GM12878 (cell line): ENCODE measurements at regions of chr19 and their contacts with region 1.

Region 1: DNA sequence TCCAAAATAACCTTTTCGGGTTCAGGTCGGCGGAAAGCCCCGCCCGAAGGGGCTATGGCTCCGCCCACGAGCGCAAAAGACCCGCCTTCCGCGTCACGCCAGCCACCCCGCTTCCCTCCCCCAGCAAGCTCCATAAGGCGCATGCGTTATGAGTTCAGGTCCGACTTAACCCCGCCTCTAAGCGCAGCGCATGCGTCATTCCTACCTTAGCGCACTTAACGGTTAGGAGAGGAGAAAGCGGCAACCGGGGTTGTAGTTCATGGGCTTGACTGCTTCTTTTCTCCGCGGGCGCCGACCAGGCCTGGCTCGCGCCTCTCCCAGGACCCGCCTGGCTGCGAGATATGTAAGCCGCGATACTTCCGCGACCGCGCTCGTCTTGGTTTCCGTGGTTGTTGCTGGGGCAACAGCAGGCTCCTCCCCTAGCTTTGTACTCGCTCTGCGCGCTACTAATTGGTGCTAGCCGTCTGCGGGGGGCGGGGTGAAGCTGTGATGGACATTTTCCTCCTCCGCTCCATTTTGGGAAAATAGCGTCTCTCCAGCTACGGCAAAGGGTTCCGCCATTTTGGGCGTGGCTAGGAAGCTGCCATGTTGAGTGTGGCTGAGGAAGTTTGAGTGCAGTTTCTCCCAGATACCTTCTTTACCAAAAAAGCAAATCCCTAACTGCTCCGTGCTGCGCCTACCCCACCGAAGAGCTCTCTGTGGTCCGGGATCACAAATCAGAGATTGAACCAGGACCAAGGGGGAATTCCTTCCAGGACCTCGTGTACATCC is at the start of gene B9D2:
- DNase-seq: peak; percentile 94
- ATAC-seq: peak; percentile 93
- H3K4me3 ChIP-seq: peak within 1 kb of the TSS; percentile 92
- H3K27ac ChIP-seq: peak within 1 kb of the TSS; percentile 94
- H3K4me1 ChIP-seq: peaks cover 28% of the 10 kb centered on the region
- H3K27me3 ChIP-seq: no peaks in the 10 kb centered on the region
- CTCF ChIP-seq: no peak
- EP300 ChIP-seq: no peak
- POLR2A ChIP-seq: peak; percentile 93
- RAD21 ChIP-seq: no peak
- polyA plus RNA-seq, gene B9D2: 2.5 to 5.0 TPM

Region 2: GRCh38 chr19:41226053-41226873 is 137.7 kb before region 1 on chr19:
- CTCF ChIA-PET with region 1: no interaction called
- POLR2A ChIA-PET with region 1: no interaction called
- RAD21 ChIA-PET with region 1: no interaction called
- SMC1A ChIA-PET with region 1: no interaction called
- in situ Hi-C with region 1: no loop called
- intact Hi-C with region 1: no loop called
- DNase-seq: no peak
- ATAC-seq: no peak
- H3K4me3 ChIP-seq: no peak overlapping the region
- H3K27ac ChIP-seq: no peak overlapping the region
- H3K4me1 ChIP-seq: no peaks in the 10 kb centered on the region
- H3K27me3 ChIP-seq: peaks cover 0 to 3% of the 10 kb centered on the region in 2 experiments; a peak in 2 of 4 replicates
- CTCF ChIP-seq: no peak
- EP300 ChIP-seq: no peak
- POLR2A ChIP-seq: no peak
- RAD21 ChIP-seq: no peak

Region 3: DNA sequence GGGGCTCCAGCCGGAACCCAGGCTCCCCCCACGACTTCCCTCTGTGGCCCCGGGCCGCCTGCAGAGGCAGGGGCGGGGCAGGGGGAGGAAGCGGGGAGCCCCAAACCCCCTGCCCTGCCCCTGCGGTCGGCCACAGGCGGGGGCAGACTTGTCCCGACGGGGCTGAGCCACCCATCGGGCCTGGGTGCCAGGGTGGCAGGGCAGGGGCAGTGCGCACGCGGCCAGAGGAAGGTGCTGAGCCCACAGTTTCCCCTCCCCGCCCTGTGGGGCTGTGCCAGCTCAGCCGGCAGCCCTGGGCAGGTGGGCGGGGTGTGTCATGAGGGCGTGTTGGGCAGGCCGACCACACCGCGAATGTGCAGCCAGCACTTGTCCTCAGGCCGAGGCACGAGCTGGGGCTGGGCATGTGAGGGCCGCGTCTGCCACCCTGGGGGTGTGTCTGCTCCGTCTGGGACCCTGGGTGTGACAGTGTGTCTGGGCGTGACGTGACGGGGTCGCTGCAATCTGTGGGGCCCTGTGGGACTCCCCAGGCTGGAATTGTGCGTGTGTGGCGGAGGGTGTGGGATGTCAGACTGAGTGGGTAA is 36.3 kb before region 1 on chr19:
- CTCF ChIA-PET with region 1: interaction called, 3 read pairs
- POLR2A ChIA-PET with region 1: interaction called, 5 read pairs
- RAD21 ChIA-PET with region 1: interaction called, 15 read pairs
- SMC1A ChIA-PET with region 1: interaction called, 4 read pairs
- in situ Hi-C with region 1: no loop called
- intact Hi-C with region 1: no loop called
- DNase-seq: no peak
- ATAC-seq: peak; percentile 86
- H3K4me3 ChIP-seq: peak overlapping the region; percentile 77
- H3K27ac ChIP-seq: peak overlapping the region; percentile 93
- H3K4me1 ChIP-seq: peaks cover 37% of the 10 kb centered on the region
- H3K27me3 ChIP-seq: no peaks in the 10 kb centered on the region
- CTCF ChIP-seq: no peak
- EP300 ChIP-seq: no peak
- POLR2A ChIP-seq: peak; percentile 78
- RAD21 ChIP-seq: no peak

Region 4: GRCh38 chr19:41376241-41376997 is 12.5 kb after region 1 on chr19 and contains the start of gene TMEM91:
- CTCF ChIA-PET with region 1: interaction called, 7 read pairs
- POLR2A ChIA-PET with region 1: interaction called, 20 read pairs
- RAD21 ChIA-PET with region 1: interaction called, 6 read pairs
- SMC1A ChIA-PET with region 1: interaction called, 24 read pairs
- in situ Hi-C with region 1: no loop called
- intact Hi-C with region 1: no loop called
- DNase-seq: no peak
- ATAC-seq: no peak
- H3K4me3 ChIP-seq: peak within 1 kb of the TSS; percentile 6; the same call in 1 of the 2 replicates
- H3K27ac ChIP-seq: no peak within 1 kb of the TSS
- H3K4me1 ChIP-seq: peaks cover 21% of the 10 kb centered on the region
- H3K27me3 ChIP-seq: no peaks in the 10 kb centered on the region
- CTCF ChIP-seq: no peak
- EP300 ChIP-seq: no peak
- POLR2A ChIP-seq: no peak
- RAD21 ChIP-seq: no peak
- polyA plus RNA-seq, gene TMEM91: 1.6 to 2.1 TPM

Region 5: DNA sequence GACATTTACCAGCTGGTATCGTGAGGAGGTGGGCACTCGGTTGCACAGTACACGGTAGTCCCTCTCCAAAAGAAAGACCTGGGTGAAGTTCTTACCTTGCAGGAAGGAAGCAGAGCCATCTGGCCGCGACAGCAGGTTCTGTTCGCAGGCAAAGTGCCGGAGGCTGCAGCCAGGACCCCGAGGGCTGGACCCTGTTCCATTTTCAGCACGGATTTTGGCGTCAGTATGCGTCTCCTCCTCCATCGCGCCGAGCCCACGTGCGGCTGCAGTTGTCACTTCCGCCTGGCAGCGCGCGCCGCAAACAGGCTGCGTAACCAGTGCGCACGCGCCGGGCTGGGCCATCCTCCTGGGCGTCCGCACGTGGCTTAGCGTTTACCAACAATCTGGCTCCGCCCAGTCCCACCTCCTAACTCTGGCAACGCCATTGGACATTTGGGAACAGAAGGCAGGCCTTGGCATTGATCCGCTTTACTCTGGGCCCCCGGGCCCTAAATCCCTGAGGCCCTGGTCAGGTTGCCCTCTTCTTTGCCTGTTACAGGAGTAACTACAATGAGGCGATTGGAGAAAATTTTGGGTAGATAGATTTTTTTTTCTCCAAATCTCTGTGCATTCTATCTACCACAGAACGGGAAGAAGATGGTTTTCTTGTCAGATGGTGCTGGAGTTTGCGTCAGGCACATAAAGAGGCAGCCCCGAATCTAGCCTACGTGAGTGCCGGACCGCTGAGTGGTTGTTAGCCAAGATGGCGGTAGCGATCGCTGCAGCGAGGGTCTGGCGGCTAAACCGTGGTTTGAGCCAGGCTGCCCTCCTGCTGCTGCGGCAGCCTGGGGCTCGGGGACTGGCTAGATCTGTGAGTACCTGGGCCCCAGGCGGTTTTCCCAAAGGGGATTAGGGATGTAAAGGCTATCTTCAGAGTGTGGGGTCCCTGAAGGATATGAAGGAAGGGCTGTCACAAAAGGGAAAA is 33.4 kb after region 1 on chr19 and contains the starts of genes BCKDHA and EXOSC5:
- CTCF ChIA-PET with region 1: interaction called, 7 read pairs
- POLR2A ChIA-PET with region 1: interaction called, 11 read pairs
- RAD21 ChIA-PET with region 1: interaction called, 4 read pairs
- SMC1A ChIA-PET with region 1: interaction called, 7 read pairs
- in situ Hi-C with region 1: no loop called
- intact Hi-C with region 1: loop called (anchors 2 kb)
- DNase-seq: peak; percentile 99
- ATAC-seq: peak; percentile 94
- H3K4me3 ChIP-seq: peak within 1 kb of the TSS; percentile 80
- H3K27ac ChIP-seq: peak within 1 kb of the TSS; percentile 99
- H3K4me1 ChIP-seq: peaks cover 21% of the 10 kb centered on the region
- H3K27me3 ChIP-seq: no peaks in the 10 kb centered on the region
- CTCF ChIP-seq: no peak
- EP300 ChIP-seq: no peak
- POLR2A ChIP-seq: peak; percentile 78
- RAD21 ChIP-seq: no peak
- polyA plus RNA-seq, gene BCKDHA: 9.9 to 28.7 TPM
- polyA plus RNA-seq, gene EXOSC5: 20.6 to 25.3 TPM

Region 6: DNA sequence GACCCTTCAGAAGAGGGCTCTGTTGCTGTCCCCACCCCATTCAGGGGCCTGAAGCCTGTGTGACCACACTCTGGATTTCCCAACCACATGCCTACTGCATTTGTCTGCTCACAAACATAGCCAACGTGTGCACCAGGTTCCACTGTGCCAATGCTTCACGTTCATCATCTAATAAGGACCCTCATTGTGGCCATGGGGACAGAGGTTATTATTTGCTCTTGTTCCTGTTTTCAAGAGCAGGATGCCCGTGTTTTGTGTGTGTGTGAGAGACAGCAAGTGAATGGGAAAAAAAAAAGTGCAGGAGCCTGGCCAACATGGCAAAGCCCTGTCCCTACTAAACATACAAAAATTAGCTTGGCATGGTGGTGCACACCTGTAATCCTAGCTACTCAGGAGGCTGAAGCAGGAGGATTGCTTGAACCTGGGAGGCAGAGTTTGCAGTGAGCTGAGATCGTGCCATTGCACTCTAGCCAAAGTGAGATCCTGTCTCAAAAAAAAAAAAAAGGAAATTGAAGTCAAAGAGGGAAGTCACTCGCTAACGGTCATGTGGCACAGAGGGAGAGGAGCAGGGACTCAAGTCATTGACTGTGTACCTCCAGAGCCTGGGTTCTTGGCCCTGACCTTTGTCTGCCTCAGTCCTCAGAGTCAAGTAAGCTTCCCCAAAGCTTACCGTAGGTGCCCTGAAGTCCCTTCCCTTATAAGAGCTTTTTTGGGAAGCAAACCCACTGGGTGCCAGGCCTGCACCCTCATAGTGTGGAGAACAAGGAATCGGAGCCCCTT is 56.4 kb after region 1 on chr19:
- CTCF ChIA-PET with region 1: no interaction called
- POLR2A ChIA-PET with region 1: no interaction called
- RAD21 ChIA-PET with region 1: no interaction called
- SMC1A ChIA-PET with region 1: no interaction called
- in situ Hi-C with region 1: no loop called
- intact Hi-C with region 1: no loop called
- DNase-seq: no peak
- ATAC-seq: no peak
- H3K4me3 ChIP-seq: no peak overlapping the region
- H3K27ac ChIP-seq: no peak overlapping the region
- H3K4me1 ChIP-seq: no peaks in the 10 kb centered on the region
- H3K27me3 ChIP-seq: no peaks in the 10 kb centered on the region
- CTCF ChIP-seq: no peak
- EP300 ChIP-seq: no peak
- POLR2A ChIP-seq: no peak
- RAD21 ChIP-seq: no peak